Heart right ventricle (tissue), 16 donors: ENCODE measurements at regions of chr16 and their contacts with region 1.

Region 1: DNA sequence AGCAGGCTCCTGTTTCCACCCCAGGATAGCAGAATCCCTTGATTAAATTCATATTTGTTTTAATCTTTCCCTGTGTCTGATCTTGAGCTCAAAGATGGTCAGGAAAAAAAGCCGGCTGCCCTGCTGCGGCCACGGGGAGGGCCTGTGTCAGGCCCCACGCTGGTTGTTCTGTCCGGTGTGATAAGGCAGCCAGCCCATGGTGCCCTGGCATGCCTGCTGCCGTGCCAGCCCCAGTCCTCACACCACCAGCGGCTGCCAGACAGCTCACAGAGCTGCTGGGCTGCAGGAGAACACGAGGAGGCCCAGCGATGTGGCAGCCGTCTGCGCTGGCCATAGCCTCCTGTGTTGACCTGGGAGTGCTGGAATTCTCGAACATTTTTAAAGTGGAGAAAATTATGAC is 34.7 kb upstream of the BRD7 start:
- DNase-seq: peak; percentile 14 to 38
- ATAC-seq: peak in 7 of 8 donors; percentile 79 to 96 (median 88)
- H3K4me3 ChIP-seq: no peak overlapping the region
- H3K27ac ChIP-seq: no peak overlapping the region
- H3K4me1 ChIP-seq: no peaks in the 10 kb centered on the region
- H3K27me3 ChIP-seq: peaks cover 0 to 4% (median 0%) of the 10 kb centered on the region in 7 donors
- CTCF ChIP-seq: no peak

Region 2: DNA sequence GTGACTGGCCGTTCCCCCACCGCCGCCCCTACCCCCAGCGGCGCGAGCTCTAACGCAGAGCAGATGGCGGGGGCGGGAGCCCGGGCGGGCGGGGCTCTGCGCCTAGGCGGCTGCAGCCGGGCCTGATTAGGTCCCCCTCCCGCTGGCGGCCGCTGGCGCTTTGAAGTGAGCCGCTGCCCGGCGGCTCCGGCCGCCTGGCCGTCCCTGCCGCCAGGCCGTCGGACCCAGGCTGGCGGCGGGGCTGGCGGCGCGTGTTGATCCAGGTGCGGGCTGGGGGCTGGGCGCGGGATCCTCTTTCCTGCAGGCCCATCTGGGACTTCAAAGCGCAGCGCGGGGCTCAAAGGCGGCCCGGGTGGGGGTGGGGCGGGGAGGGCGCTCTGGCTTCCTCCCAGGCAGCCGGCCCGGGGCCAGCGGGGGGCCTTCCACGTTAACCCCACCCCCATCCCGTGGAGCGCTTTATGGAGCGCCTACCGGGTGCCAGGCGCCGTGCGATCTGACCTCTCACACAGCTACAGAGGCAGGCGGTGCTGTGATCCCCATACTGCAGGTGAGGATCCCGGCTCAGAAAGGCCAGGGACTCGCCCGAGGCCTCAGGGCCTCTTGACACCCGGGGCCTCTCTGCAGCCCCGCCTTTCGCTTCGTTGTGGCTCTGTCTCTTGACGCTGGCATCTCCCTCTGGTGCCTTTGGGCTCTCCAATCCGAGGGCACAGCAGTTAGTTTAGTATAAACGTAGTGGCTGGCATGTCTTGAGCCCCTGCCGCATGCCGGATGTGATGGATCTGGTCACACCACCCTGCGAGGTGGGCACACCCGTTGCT is 64.7 kb after region 1 on chr16:
- intact Hi-C with region 1: loop called in 1 of 10 experiments (anchors 10 kb)
- DNase-seq: no peak
- ATAC-seq: peak in 1 of 8 donors; percentile 25
- H3K4me3 ChIP-seq: peak overlapping the region in 8 of 10 donors; percentile 18 to 41 (median 29)
- H3K27ac ChIP-seq: no peak overlapping the region
- H3K4me1 ChIP-seq: peaks cover 3 to 9% (median 5%) of the 10 kb centered on the region in 9 donors
- H3K27me3 ChIP-seq: peaks cover 0 to 88% (median 69%) of the 10 kb centered on the region in 7 donors
- CTCF ChIP-seq: no peak

Region 3: DNA sequence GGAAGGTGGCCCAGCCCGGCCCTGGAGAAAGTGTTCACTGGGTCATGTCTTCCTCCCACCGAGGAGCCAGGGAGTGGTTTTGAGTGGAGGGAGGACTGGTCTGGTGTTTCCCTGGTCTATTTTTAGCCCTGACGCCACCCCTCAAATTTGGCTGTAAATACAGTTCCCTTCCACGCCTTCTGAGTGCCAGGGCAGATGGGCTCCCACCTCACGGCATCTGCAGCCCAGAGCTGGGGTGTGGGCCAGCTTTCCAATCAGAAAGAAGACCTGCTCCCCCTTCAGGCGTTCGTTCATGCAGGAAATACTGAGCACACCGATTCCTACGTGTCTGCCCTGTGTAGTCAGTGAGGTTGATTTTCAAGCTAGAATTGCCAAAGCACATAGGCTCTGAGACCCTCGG is 223.9 kb after region 1 on chr16:
- intact Hi-C with region 1: no loop called
- DNase-seq: peak; percentile 39 to 59
- ATAC-seq: peak; percentile 71 to 90 (median 83)
- H3K4me3 ChIP-seq: no peak overlapping the region
- H3K27ac ChIP-seq: no peak overlapping the region
- H3K4me1 ChIP-seq: peaks cover 0 to 13% (median 10%) of the 10 kb centered on the region in 9 donors
- H3K27me3 ChIP-seq: no peaks in the 10 kb centered on the region
- CTCF ChIP-seq: peak in 8 of 9 donors; percentile 13 to 60 (median 42)